AG04449 (cell line): ENCODE measurements at regions of chr19 and their contacts with region 1.

Region 1: DNA sequence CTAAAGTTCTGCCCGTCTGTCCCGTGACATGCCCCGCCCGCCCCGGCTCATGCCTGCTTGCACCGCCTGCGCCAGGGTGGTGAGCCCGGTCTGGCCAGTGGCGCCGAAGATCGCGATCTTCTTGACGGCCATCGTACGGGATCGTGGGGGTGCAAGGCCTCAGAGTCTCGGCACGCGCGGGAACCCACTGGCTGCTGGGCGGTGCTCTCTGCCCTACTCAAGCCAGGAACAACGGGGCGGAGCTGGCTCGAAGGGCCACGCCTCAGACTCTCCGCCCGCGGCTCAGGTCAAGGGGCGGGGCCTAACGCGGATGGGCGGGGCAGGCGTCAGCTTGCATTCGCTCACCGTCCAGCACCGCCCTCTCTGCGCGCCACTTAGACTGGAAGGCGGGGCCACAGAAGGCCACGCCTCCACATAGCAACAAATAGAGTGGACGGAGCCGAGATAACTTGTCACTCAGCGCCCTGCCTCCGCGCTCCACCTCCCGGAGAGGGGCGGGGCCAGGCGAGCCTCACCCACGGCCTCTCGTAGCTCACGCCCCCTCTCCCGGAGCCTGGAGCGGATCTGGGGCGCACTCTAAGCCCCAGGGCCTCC is at the start of gene BLVRB:
- DNase-seq: peak; percentile 93
- H3K4me3 ChIP-seq: peak within 1 kb of the TSS; percentile 81
- CTCF ChIP-seq: no peak

Region 2: DNA sequence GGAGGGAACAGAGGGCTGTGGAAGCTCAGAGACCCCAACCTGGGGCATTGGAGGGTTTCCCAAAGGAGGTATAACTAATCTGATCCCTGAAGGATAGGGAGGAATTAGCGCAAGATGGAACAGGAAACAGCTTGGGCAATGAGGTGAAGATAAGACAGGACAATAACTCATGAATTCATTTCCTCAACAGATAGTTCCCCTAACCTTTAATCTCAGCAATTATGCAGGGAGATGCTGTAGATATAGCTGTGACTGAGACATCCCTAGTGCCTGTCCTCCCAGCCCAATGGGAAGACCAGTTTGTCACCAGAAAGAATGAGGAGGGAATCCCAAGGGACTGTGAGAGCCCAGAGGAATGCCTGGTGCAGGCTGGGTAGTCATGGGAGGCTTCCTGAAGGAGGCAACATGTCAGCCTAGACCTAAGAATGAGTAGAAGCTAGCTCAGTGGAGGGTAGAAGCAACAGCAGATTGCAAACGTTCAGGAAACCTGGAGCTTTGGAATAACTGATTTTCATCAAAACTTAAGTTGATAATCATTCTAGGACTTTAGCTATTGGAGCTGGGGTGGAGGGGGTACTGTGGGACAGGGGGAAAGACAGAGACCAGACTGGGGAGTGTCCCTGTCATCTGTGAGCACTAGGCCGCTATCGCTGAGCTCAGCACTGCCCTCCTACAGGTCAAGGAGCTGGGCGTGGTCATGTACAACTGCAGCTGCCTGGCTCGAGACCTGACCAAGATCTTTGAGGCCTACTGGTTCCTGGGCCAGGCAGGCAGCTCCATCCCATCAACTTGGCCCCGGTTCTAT is 94.5 kb before region 1 on chr19:
- CTCF ChIA-PET with region 1: no interaction called
- POLR2A ChIA-PET with region 1: no interaction called
- DNase-seq: no peak
- H3K4me3 ChIP-seq: no peak overlapping the region
- CTCF ChIP-seq: no peak

Region 3: GRCh38 chr19:40425450-40426287 is 40.0 kb before region 1 on chr19 and contains the start of gene SERTAD1:
- CTCF ChIA-PET with region 1: interaction called, 30 read pairs
- POLR2A ChIA-PET with region 1: interaction called, 8 read pairs
- DNase-seq: peak; percentile 94
- H3K4me3 ChIP-seq: peak within 1 kb of the TSS; percentile 90
- CTCF ChIP-seq: peak; percentile 62

Region 4: GRCh38 chr19:40452016-40452415 is 13.6 kb before region 1 on chr19:
- CTCF ChIA-PET with region 1: interaction called, 75 read pairs
- POLR2A ChIA-PET with region 1: no interaction called
- DNase-seq: no peak
- H3K4me3 ChIP-seq: no peak overlapping the region
- CTCF ChIP-seq: no peak

Region 5: GRCh38 chr19:40598121-40598917 is 132.7 kb after region 1 on chr19:
- CTCF ChIA-PET with region 1: interaction called, 19 read pairs
- POLR2A ChIA-PET with region 1: interaction called, 4 read pairs
- DNase-seq: no peak
- H3K4me3 ChIP-seq: peak overlapping the region; percentile 65
- CTCF ChIP-seq: peak; percentile 97

Region 6: DNA sequence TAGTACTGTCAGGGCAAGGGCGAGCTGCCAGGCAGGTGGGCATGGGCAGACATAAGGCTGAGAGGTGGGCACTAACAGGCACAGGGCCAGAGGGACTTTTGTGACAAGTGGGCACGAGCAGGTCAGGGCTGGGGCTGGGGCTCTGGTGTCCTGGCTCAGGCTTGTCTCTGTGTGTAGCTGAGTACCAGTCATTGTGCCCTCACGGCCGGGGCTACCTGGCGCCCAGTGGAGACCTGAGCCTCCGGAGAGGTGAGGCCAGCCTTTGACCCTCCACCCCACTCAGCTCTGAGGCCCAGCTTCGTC is 157.1 kb after region 1 on chr19:
- CTCF ChIA-PET with region 1: no interaction called
- POLR2A ChIA-PET with region 1: no interaction called
- DNase-seq: no peak
- H3K4me3 ChIP-seq: no peak overlapping the region
- CTCF ChIP-seq: no peak

Region 7: DNA sequence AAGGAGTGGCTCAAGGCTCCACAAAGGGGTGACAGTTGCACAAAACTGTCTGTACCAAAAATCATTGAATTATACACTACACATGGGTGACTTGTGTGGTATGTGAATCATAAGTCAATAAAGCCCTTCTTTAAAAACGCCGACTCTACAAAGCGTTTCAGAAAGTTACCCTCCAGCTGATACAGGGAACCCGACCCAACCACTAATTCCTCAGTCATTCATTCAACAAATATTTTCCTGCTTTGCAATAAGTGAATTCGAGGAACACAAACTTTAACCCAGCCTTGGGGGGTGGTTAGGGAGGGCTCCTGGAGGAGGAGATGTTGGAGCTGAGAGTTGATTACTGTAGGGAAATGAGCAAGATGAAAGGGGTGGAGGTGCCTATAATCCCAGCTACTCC is 167.6 kb after region 1 on chr19:
- CTCF ChIA-PET with region 1: interaction called, 25 read pairs
- POLR2A ChIA-PET with region 1: no interaction called
- DNase-seq: peak; percentile 26
- H3K4me3 ChIP-seq: no peak overlapping the region
- CTCF ChIP-seq: no peak